H1 (cell line): ENCODE measurements at regions of chr1 and their contacts with region 1.

Region 1: GRCh38 chr1:96236156-96236739 is 485.3 kb upstream of the PTBP2 start:
- DNase-seq: no peak
- H3K4me3 ChIP-seq: no peak overlapping the region
- H3K27ac ChIP-seq: no peak overlapping the region
- H3K4me1 ChIP-seq: no peaks in the 10 kb centered on the region
- H3K27me3 ChIP-seq: no peaks in the 10 kb centered on the region
- CTCF ChIP-seq: peak in 2 of 3 experiments; percentile 10 to 57; a peak in 2 of 4 replicates
- EP300 ChIP-seq: no peak
- POLR2A ChIP-seq: no peak
- RAD21 ChIP-seq: peak; percentile 75 to 78

Region 2: GRCh38 chr1:95953015-95953414 is 283.2 kb before region 1 on chr1:
- CTCF ChIA-PET with region 1: interaction called, 15 read pairs
- POLR2A ChIA-PET with region 1: no interaction called
- DNase-seq: peak in 1 of 2 experiments; percentile 9
- H3K4me3 ChIP-seq: no peak overlapping the region
- H3K27ac ChIP-seq: no peak overlapping the region
- H3K4me1 ChIP-seq: peaks cover 0 to 4% (median 4%) of the 10 kb centered on the region in 4 experiments; a peak in 2 of 7 replicates
- H3K27me3 ChIP-seq: no peaks in the 10 kb centered on the region
- CTCF ChIP-seq: peak in 2 of 3 experiments; percentile 33 to 35; a peak in 2 of 4 replicates
- EP300 ChIP-seq: no peak
- POLR2A ChIP-seq: no peak
- RAD21 ChIP-seq: peak; percentile 79 to 81

Region 3: GRCh38 chr1:96220639-96221038 is 15.6 kb before region 1 on chr1:
- CTCF ChIA-PET with region 1: interaction called, 10 read pairs
- POLR2A ChIA-PET with region 1: no interaction called
- DNase-seq: no peak
- H3K4me3 ChIP-seq: no peak overlapping the region
- H3K27ac ChIP-seq: no peak overlapping the region
- H3K4me1 ChIP-seq: no peaks in the 10 kb centered on the region
- H3K27me3 ChIP-seq: no peaks in the 10 kb centered on the region
- CTCF ChIP-seq: no peak
- EP300 ChIP-seq: no peak
- POLR2A ChIP-seq: no peak
- RAD21 ChIP-seq: no peak